Sigmoid colon (tissue), 7 donors: ENCODE measurements at regions of chr16 and their contacts with region 1.

Region 1: GRCh38 chr16:48949636-48950035 is 332.0 kb downstream of the CBLN1 start:
- DNase-seq: no peak
- H3K4me3 ChIP-seq: no peak overlapping the region
- H3K27ac ChIP-seq: peak overlapping the region in 3 of 4 donors; percentile 64 to 82 (median 81)
- H3K4me1 ChIP-seq: peaks cover 0 to 55% (median 44%) of the 10 kb centered on the region in 4 donors
- H3K27me3 ChIP-seq: no peaks in the 10 kb centered on the region
- CTCF ChIP-seq: no peak
- EP300 ChIP-seq: no peak
- POLR2A ChIP-seq: no peak

Region 2: DNA sequence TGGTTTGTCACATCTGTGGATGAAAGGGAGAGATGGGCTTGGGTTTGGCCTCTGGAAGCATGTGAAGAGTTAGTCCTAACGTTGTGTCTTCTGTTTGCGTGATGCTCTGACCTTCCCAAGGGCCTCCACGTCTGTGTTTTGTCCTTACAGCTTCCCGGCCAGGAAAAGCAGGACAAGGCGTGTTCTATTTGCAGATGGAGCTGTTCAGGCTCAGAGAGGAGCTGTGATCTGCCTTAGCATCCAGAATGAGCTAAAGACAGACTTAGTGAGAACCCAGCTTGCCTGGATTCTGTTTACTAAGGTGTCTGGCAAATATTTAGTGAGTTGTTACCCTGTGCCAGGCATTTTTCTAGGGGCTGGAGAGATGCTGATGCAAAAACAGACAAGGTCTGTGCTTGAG is 49.9 kb after region 1 on chr16:
- intact Hi-C with region 1: loop called (anchors 2 kb)
- DNase-seq: peak; percentile 76
- H3K4me3 ChIP-seq: no peak overlapping the region
- H3K27ac ChIP-seq: peak overlapping the region in 3 of 4 donors; percentile 73 to 88 (median 86)
- H3K4me1 ChIP-seq: peaks cover 0 to 57% (median 48%) of the 10 kb centered on the region in 4 donors
- H3K27me3 ChIP-seq: no peaks in the 10 kb centered on the region
- CTCF ChIP-seq: no peak
- EP300 ChIP-seq: peak in 2 of 4 donors; percentile 67 to 80
- POLR2A ChIP-seq: no peak

Region 3: DNA sequence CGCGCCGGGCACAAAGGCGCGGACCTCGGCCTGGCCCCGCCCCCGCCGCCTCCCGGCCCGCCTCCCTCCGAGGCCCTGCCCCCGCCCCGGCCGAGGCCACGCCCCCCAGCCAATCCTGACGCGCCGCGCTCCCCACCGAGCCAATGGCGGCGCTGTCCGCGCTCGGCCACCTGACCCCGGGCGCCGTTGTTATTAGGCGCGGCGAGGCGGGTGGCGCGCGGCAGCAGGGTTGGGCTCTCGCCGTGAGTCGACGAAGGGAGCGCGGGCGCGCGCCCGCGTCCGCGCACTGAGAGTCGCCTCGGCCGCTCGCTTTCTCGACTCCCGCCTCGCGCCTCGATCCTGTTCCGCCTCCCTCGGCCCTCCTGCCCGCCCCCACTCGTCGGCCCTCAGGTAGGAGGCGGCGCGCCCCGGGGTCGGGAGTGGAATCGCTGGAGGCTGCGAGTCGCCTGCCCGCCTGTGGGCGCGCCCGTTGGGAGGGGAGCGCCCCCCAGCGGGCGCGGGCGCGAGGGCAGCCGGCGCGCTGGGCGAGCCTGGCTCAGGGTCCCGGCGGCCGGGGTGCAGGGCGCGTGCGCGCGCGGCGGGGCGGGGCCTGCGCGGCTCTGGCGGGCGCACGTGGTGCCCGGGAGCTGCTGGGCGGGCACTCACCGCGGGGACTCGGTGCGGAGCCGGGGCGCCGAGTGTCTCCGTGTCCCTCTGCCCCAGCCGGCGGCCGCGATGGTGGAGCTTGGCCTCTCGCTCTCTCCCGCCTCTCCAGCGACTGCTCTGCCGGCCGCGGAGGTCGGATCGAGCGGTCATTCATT is 332.4 kb after region 1 on chr16:
- intact Hi-C with region 1: loop called (anchors 10 kb)
- DNase-seq: peak; percentile 88
- H3K4me3 ChIP-seq: peak overlapping the region; percentile 29 to 57 (median 52)
- H3K27ac ChIP-seq: peak overlapping the region; percentile 55 to 81 (median 75)
- H3K4me1 ChIP-seq: peaks cover 0 to 49% (median 44%) of the 10 kb centered on the region in 4 donors
- H3K27me3 ChIP-seq: peaks cover 45 to 98% (median 74%) of the 10 kb centered on the region in 3 donors
- CTCF ChIP-seq: peak in 1 of 4 experiments; percentile 21
- EP300 ChIP-seq: no peak
- POLR2A ChIP-seq: no peak